ENCODE measurements at regions of chr7 and their contacts with region 1.

Region 1: GRCh38 chr7:143372070-143372469 is 9.1 kb upstream of the ZYX start:
- DNase-seq: peak; percentile 46 to 65 (median 55)
- H3K4me3 ChIP-seq: no peak overlapping the region
- H3K4me3 Mint-ChIP-seq: peak overlapping the region in 7 of 8 donors; percentile 21 to 66 (median 62)
- H3K27ac ChIP-seq: no peak overlapping the region
- H3K27ac Mint-ChIP-seq: peak overlapping the region; percentile 65 to 90 (median 74)
- H3K4me1 ChIP-seq: peaks cover 43% of the 10 kb centered on the region
- H3K4me1 Mint-ChIP-seq: peaks cover 40 to 60% (median 50%) of the 10 kb centered on the region in 4 donors
- H3K27me3 ChIP-seq: no peaks in the 10 kb centered on the region
- H3K27me3 Mint-ChIP-seq: peaks cover 0 to 2% of the 10 kb centered on the region in 2 donors

Region 2: DNA sequence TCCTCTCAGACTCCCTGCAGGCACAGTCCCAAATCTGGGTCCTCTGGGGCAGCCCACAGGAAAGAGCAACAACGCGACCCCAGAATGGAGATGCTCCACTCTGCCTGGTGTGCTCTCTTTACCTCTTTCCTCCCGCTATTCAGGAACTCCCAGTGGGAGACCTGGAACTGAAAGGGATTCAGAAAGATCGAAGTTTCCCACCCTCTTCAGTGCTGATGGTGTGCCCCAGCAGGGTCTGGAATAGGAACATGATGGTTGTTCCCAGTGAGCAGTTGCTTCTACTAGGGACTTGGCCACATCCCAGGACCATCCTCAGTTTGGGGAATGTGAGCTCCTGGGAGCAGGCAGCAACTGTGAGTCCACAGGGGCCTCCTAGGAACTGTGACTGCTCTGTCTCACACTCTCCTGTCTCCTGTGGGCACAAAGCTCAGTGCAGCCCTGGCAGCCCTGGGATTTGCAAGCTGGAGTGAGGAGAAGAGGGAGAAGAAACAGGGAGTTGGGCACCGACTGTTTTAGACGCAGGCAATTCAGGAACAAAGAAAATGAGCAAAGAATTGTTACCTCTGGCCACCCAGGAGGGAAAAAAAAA is 302.1 kb before region 1 on chr7:
- CTCF ChIA-PET with region 1: no interaction called
- POLR2A ChIA-PET with region 1: no interaction called
- intact Hi-C with region 1: no loop called
- DNase-seq: no peak
- H3K4me3 ChIP-seq: no peak overlapping the region
- H3K4me3 Mint-ChIP-seq: peak overlapping the region in 1 of 8 donors; percentile 42
- H3K27ac ChIP-seq: no peak overlapping the region
- H3K27ac Mint-ChIP-seq: no peak overlapping the region
- H3K4me1 ChIP-seq: no peaks in the 10 kb centered on the region
- H3K4me1 Mint-ChIP-seq: no peaks in the 10 kb centered on the region
- H3K27me3 ChIP-seq: no peaks in the 10 kb centered on the region
- H3K27me3 Mint-ChIP-seq: peaks cover 13 to 16% of the 10 kb centered on the region in 2 donors

Region 3: GRCh38 chr7:143248761-143249354 is 123.2 kb before region 1 on chr7:
- CTCF ChIA-PET with region 1: interaction called, 9 read pairs
- POLR2A ChIA-PET with region 1: interaction called, 5 read pairs
- intact Hi-C with region 1: loop called (anchors 2 kb)
- DNase-seq: no peak
- H3K4me3 ChIP-seq: no peak overlapping the region
- H3K4me3 Mint-ChIP-seq: peak overlapping the region in 7 of 8 donors; percentile 25 to 67 (median 47)
- H3K27ac ChIP-seq: no peak overlapping the region
- H3K27ac Mint-ChIP-seq: peak overlapping the region; percentile 24 to 90 (median 70)
- H3K4me1 ChIP-seq: peaks cover 93% of the 10 kb centered on the region
- H3K4me1 Mint-ChIP-seq: peaks cover 73 to 98% (median 84%) of the 10 kb centered on the region in 4 donors
- H3K27me3 ChIP-seq: no peaks in the 10 kb centered on the region
- H3K27me3 Mint-ChIP-seq: no peaks in the 10 kb centered on the region

Region 4: GRCh38 chr7:143299840-143300239 is 72.2 kb before region 1 on chr7:
- CTCF ChIA-PET with region 1: interaction called, 20 read pairs
- POLR2A ChIA-PET with region 1: interaction called, 4 read pairs
- intact Hi-C with region 1: no loop called
- DNase-seq: peak; percentile 61 to 70 (median 68)
- H3K4me3 ChIP-seq: no peak overlapping the region
- H3K4me3 Mint-ChIP-seq: peak overlapping the region in 5 of 8 donors; percentile 26 to 50 (median 30)
- H3K27ac ChIP-seq: no peak overlapping the region
- H3K27ac Mint-ChIP-seq: peak overlapping the region; percentile 14 to 78 (median 56)
- H3K4me1 ChIP-seq: peaks cover 31% of the 10 kb centered on the region
- H3K4me1 Mint-ChIP-seq: peaks cover 32 to 44% (median 39%) of the 10 kb centered on the region in 4 donors
- H3K27me3 ChIP-seq: no peaks in the 10 kb centered on the region
- H3K27me3 Mint-ChIP-seq: no peaks in the 10 kb centered on the region

Region 5: DNA sequence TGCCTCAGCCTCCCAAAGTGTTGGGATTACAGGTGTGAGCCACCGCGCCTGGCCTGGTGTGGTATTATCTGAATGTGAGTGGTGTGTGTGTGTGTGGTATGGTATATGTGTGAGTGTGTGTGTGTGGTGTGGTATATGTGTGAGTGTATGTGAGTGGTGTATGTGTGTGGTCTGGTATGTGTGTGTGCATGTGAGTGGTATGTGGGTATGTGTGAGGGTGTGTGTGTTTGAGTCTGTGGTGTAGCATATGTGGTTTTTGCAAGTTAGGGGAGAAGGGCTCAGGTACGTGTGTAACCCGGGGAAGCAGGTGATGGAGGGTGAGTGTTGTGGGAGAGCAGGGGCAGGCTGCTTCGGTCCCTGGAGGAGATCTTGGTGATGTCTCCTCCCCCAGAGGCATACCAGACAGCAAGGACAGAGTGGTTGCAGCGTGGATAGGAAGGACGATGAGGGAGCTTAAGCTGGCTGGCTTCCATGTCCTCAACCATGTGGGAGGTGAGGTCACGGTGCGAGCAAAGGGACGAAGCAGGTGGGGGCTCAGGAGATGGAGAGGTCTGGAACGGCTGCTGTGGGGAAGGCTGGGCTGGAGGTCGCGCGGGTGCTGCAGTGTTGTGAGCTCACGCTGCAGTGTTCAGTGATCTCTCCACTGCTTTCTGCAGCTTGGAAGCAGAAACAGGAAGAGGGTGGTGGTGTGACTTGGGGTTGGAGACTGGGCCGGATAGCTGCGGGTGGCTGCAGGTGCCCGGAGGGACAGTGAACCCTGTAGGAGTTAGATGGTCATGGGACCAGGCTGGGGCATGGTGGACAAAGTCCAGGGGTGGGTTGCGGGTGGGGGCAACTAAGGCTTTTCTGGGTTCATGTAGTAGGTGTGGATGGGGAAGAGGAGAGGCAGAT is 14.1 kb after region 1 on chr7:
- CTCF ChIA-PET with region 1: interaction called, 11 read pairs
- POLR2A ChIA-PET with region 1: interaction called, 28 read pairs
- intact Hi-C with region 1: loop called (anchors 2 kb)
- DNase-seq: peak; percentile 47 to 74 (median 56)
- H3K4me3 ChIP-seq: peak overlapping the region in 1 of 2 donors; percentile 46
- H3K4me3 Mint-ChIP-seq: no peak overlapping the region
- H3K27ac ChIP-seq: peak overlapping the region; percentile 49
- H3K27ac Mint-ChIP-seq: no peak overlapping the region
- H3K4me1 ChIP-seq: peaks cover 55% of the 10 kb centered on the region
- H3K4me1 Mint-ChIP-seq: peaks cover 5 to 16% (median 11%) of the 10 kb centered on the region in 4 donors
- H3K27me3 ChIP-seq: no peaks in the 10 kb centered on the region
- H3K27me3 Mint-ChIP-seq: no peaks in the 10 kb centered on the region

Region 6: DNA sequence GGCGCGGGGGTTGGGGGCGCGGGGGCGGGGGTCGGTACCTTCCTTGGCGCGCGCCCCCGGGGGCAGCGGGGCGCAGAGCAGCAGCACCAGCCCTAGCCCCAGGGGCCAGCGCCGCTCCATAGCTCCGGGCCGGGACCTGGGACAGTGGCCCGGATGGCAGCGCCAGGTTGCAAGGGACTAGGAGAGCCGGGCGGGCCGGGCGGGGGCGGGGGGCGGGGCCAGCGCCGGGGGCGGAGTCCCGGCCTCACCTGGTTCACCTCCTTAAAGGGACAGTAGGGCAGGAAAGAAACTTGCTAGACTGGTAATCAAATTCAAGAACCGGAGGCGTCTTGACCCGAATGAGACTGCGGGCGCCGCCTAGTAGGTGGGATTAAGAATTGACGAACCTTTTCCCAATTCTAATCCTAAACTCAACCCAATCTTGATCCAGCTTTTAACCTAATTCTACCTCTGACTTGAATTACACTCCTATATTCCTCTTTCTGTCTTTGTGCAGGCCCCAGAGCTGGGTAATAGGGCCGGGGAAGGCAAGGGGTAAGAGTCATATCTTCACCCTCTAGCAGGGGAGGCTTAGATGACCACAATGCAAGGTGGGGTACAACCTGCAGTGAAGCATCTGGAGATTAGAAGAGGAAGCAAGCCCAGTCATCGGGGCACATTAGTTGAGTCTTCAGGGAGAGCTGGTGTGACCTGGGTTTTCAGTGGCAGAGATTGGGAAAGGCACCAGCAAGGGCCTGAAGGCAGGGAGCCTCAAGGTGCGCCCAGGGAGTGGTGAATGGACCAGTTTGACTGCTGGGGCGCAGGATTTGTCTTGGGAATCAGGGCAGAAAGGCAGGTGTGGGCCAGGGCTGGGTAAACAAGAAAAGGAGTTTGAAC is 36.9 kb after region 1 on chr7 and contains the start of gene EPHA1:
- CTCF ChIA-PET with region 1: interaction called, 71 read pairs
- POLR2A ChIA-PET with region 1: interaction called, 37 read pairs
- intact Hi-C with region 1: no loop called
- DNase-seq: peak; percentile 52 to 62 (median 57)
- H3K4me3 ChIP-seq: peak within 1 kb of the TSS; percentile 58 to 66
- H3K4me3 Mint-ChIP-seq: peak within 1 kb of the TSS; percentile 89 to 97 (median 92)
- H3K27ac ChIP-seq: peak within 1 kb of the TSS; percentile 15
- H3K27ac Mint-ChIP-seq: peak within 1 kb of the TSS; percentile 76 to 96 (median 96)
- H3K4me1 ChIP-seq: peaks cover 48% of the 10 kb centered on the region
- H3K4me1 Mint-ChIP-seq: peaks cover 47 to 73% (median 55%) of the 10 kb centered on the region in 4 donors
- H3K27me3 ChIP-seq: no peaks in the 10 kb centered on the region
- H3K27me3 Mint-ChIP-seq: no peaks in the 10 kb centered on the region
- total RNA-seq, gene EPHA1: 30.7 to 34.4 TPM